ENCODE measurements at regions of chr12 and their contacts with region 1.

Region 1: GRCh38 chr12:113048716-113049127 is 7.8 kb upstream of the DTX1 start:
- DNase-seq: peak; percentile 64 to 83 (median 74)
- H3K4me3 ChIP-seq: no peak overlapping the region
- H3K27ac ChIP-seq: no peak overlapping the region
- H3K4me1 ChIP-seq: no peaks in the 10 kb centered on the region
- H3K27me3 ChIP-seq: no peaks in the 10 kb centered on the region
- CTCF ChIP-seq: peak; percentile 82 to 90 (median 86)
- POLR2A ChIP-seq: no peak

Region 2: GRCh38 chr12:112822056-112822455 is 226.7 kb before region 1 on chr12:
- intact Hi-C with region 1: no loop called
- DNase-seq: peak in 1 of 7 donors; percentile 51
- H3K4me3 ChIP-seq: no peak overlapping the region
- H3K27ac ChIP-seq: no peak overlapping the region
- H3K4me1 ChIP-seq: no peaks in the 10 kb centered on the region
- H3K27me3 ChIP-seq: no peaks in the 10 kb centered on the region
- CTCF ChIP-seq: no peak
- POLR2A ChIP-seq: no peak

Region 3: DNA sequence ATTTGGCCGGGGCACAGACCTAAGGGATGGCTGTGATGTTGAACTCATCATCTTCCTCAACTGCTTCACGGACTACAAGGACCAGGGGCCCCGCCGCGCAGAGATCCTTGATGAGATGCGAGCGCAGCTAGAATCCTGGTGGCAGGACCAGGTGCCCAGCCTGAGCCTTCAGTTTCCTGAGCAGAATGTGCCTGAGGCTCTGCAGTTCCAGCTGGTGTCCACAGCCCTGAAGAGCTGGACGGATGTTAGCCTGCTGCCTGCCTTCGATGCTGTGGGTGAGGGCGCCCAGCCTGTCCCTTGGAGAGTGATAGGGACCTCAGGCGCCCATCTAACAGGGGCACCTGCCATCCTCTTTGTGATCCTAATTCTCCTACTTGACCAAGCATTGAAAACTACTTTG is 98.0 kb before region 1 on chr12:
- intact Hi-C with region 1: no loop called
- DNase-seq: peak in 2 of 7 donors; percentile 11 to 65
- H3K4me3 ChIP-seq: no peak overlapping the region
- H3K27ac ChIP-seq: no peak overlapping the region
- H3K4me1 ChIP-seq: no peaks in the 10 kb centered on the region
- H3K27me3 ChIP-seq: no peaks in the 10 kb centered on the region
- CTCF ChIP-seq: no peak
- POLR2A ChIP-seq: no peak

Region 4: DNA sequence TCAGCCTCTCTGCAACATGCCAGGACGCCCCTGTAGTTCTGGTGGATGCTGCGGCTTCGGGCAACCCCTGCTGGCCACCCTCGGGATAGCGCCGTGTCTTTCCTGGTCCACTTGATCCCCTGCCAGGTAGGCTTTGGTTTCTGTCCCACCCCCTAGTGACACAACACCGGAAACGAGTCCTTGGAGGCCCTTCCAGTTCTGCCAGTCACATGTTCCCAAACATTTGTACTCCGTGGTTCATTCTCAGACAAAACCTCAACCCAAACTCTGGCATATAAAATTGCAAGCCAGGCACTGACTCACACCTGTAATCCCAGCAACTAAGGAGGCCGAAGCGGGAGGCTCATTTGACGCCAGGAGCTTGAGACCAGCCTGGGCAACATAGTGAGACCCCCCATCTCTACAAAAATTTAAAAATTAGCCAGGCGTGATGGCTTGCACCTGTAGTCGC is 49.7 kb after region 1 on chr12:
- intact Hi-C with region 1: loop called in 1 of 2 experiments (anchors 5 kb)
- DNase-seq: peak; percentile 91 to 97 (median 95)
- H3K4me3 ChIP-seq: no peak overlapping the region
- H3K27ac ChIP-seq: peak overlapping the region in 3 of 5 donors; percentile 61 to 80 (median 63)
- H3K4me1 ChIP-seq: no peaks in the 10 kb centered on the region
- H3K27me3 ChIP-seq: no peaks in the 10 kb centered on the region
- CTCF ChIP-seq: peak; percentile 84 to 96 (median 93)
- POLR2A ChIP-seq: no peak

Region 5: GRCh38 chr12:113152835-113153814 is 104.4 kb after region 1 on chr12:
- intact Hi-C with region 1: loop called (anchors 5 kb)
- DNase-seq: peak; percentile 72 to 83 (median 79)
- H3K4me3 ChIP-seq: peak overlapping the region in 2 of 4 donors; percentile 34 to 54
- H3K27ac ChIP-seq: no peak overlapping the region
- H3K4me1 ChIP-seq: peaks cover 6 to 13% of the 10 kb centered on the region in 2 donors
- H3K27me3 ChIP-seq: no peaks in the 10 kb centered on the region
- CTCF ChIP-seq: peak; percentile 29 to 58 (median 48)
- POLR2A ChIP-seq: no peak

Region 6: DNA sequence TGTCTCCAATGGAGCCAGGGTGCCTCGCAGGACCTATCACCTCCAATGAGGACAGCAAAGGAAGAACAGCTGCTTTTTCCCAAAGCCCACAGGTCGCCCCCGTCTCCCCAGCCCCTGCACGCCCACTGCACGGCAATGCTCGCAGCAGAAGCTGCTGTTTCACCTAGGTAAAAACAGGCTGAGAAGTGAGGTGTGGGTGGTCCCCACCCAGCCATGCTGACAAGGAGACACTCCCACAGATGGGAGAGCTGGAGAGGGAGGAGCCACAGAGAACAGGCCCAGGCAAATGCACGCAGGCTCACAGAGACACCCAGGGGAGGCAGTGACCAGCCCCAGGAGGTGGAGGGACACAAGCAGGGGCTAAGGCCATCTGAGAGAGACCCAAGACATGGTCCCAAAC is 111.2 kb after region 1 on chr12:
- intact Hi-C with region 1: loop called in 1 of 2 experiments (anchors 5 kb)
- DNase-seq: no peak
- H3K4me3 ChIP-seq: no peak overlapping the region
- H3K27ac ChIP-seq: no peak overlapping the region
- H3K4me1 ChIP-seq: peaks cover 0 to 8% of the 10 kb centered on the region in 2 donors
- H3K27me3 ChIP-seq: no peaks in the 10 kb centered on the region
- CTCF ChIP-seq: no peak
- POLR2A ChIP-seq: no peak

Region 7: DNA sequence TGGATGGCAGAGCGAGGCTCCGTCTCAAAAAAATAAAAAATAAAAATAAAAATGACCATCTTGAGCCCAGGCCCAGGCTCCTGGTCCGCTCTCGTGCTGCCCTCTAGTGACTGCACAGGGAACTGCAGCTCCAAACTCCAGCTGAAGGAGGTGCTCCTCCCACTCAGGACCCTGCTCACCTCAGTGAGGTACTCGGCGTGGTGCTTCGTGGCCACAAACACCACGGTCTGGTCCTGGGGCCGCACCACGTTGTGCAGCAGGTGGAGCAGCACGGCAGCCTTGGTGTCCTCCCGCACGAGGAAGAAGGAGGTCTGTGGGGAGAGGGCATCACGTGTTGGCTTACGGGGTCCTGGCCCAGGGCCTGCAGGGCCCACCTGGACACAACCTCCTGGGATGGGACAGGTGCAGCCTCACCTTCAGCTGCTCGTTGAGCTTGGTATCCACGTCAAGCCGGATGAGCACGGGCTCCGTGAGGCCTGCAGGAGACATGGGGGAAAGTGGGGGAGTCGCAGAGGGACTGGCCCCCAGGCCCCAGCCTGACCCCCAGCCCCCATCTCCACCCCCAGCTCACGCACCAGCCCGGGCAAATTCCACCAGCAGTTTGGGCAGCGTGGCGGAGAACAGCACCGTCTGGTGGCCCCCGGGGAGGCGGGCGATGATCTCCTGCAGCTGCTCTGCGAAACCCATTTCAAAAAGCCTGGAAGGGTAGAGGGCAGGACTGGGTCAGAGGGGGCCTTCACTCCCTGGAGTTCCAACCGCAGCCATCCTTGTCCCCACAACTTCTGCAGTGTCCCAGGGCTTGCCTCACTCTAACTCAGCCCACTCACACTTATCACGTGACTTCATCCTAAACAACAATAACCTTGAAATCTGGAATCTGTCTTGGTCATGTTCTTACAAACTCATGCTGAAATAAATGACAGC is 126.0 kb after region 1 on chr12:
- intact Hi-C with region 1: loop called (anchors 2 to 5 kb)
- DNase-seq: peak; percentile 75 to 91 (median 84)
- H3K4me3 ChIP-seq: no peak overlapping the region
- H3K27ac ChIP-seq: no peak overlapping the region
- H3K4me1 ChIP-seq: peaks cover 0 to 10% of the 10 kb centered on the region in 2 donors
- H3K27me3 ChIP-seq: no peaks in the 10 kb centered on the region
- CTCF ChIP-seq: peak; percentile 93 to 99 (median 97)
- POLR2A ChIP-seq: no peak

Region 8: DNA sequence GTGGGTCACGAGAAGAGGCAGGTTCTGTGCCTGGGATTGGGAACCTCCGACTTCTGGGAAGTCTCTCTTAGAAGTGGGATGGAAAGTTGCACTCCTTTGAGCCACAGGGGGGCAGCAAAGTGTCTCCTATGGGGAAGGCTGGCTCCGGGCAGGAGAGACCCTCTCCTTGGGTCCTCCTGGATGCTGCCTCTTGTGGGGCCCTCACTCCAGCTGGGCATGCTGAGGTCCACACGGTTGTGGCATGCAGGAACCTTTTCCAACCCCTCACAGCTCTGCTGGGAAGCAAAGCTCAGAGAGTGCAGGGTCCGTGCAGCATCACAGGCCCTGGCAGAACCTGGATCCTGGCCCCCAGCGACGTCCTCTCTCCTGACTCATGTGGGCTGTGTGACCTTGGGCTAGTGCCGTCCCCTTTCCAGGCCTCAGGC is 390.9 kb after region 1 on chr12:
- intact Hi-C with region 1: loop called in 1 of 2 experiments (anchors 10 kb)
- DNase-seq: peak in 5 of 7 donors; percentile 51 to 66 (median 58)
- H3K4me3 ChIP-seq: no peak overlapping the region
- H3K27ac ChIP-seq: no peak overlapping the region
- H3K4me1 ChIP-seq: no peaks in the 10 kb centered on the region
- H3K27me3 ChIP-seq: no peaks in the 10 kb centered on the region
- CTCF ChIP-seq: peak; percentile 42 to 63 (median 54)
- POLR2A ChIP-seq: no peak

Measured in adrenal gland (tissue), 19 donors.